ENCODE measurements at regions of chr15 and their contacts with region 1.

Region 1: GRCh38 chr15:39976291-39977274 is 42.7 kb downstream of the EIF2AK4 start:
- DNase-seq: peak; percentile 51
- H3K4me3 Mint-ChIP-seq: peak overlapping the region; percentile 67
- H3K27ac Mint-ChIP-seq: peak overlapping the region; percentile 55
- H3K4me1 Mint-ChIP-seq: peaks cover 8% of the 10 kb centered on the region
- H3K27me3 Mint-ChIP-seq: no peaks in the 10 kb centered on the region
- CTCF ChIP-seq: peak; percentile 38

Region 2: DNA sequence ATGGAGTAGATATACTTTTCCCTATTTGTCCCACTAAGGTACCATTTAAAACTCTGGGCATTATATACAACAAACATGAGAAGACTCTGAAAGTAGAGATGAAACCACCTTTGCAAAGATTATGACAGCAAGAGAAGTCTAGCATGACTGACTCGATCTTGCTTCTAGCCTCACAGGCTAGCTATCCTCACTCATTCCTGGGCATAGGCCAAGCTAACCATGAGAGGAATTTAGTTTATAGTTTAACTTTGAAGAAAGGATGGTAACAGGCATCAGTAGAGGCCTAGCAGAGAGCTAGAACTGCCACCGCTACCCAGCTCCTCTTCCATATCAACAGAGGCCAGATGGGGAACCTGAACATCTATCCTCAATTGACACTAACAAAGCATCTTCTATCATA is 130.5 kb before region 1 on chr15:
- CTCF ChIA-PET with region 1: no interaction called
- intact Hi-C with region 1: no loop called
- DNase-seq: no peak
- H3K4me3 Mint-ChIP-seq: no peak overlapping the region
- H3K27ac Mint-ChIP-seq: no peak overlapping the region
- H3K4me1 Mint-ChIP-seq: no peaks in the 10 kb centered on the region
- H3K27me3 Mint-ChIP-seq: no peaks in the 10 kb centered on the region
- CTCF ChIP-seq: no peak

Region 3: GRCh38 chr15:39887832-39888231 is 88.8 kb before region 1 on chr15:
- CTCF ChIA-PET with region 1: interaction called, 3 read pairs
- intact Hi-C with region 1: loop called (anchors 5 kb)
- DNase-seq: peak; percentile 10
- H3K4me3 Mint-ChIP-seq: no peak overlapping the region
- H3K27ac Mint-ChIP-seq: no peak overlapping the region
- H3K4me1 Mint-ChIP-seq: peaks cover 24% of the 10 kb centered on the region
- H3K27me3 Mint-ChIP-seq: no peaks in the 10 kb centered on the region
- CTCF ChIP-seq: no peak

Region 4: DNA sequence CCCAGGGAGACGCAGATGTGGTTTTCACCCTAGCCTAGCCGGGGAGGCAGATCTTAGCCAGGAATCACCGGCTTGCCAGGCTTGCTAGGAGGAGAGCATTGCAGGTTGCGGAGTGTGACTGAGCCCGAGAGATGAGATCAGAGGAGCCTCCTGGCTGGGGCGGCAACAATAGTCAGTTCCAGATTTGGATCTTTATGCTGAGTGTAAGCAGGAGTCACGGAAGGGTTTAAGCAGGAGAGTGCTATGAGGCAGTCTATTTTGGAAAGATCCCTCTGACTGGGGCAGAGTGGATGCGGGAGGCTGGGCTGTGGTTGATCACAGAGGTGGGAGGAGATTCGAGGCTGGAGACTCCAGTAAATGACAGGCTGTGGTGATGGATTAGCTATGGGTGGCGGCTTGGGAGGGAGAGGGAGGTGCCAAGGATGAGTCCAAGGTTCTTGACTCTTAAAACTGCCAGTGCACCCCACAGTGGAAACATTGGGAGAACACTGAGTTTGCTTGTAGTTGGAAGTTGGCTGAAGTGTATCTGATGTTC is 453.8 kb after region 1 on chr15:
- CTCF ChIA-PET with region 1: no interaction called
- intact Hi-C with region 1: no loop called
- DNase-seq: no peak
- H3K4me3 Mint-ChIP-seq: no peak overlapping the region
- H3K27ac Mint-ChIP-seq: no peak overlapping the region
- H3K4me1 Mint-ChIP-seq: peaks cover under 1% of the 10 kb centered on the region
- H3K27me3 Mint-ChIP-seq: peaks cover 38% of the 10 kb centered on the region
- CTCF ChIP-seq: no peak

Measured in Calu3 (cell line).